Activated T-helper 2 cell treated with anti-CD3 and anti-CD28 coated beads, Interferon-gamma antibody, Interleukin-2, Interleukin-4, amounts not matched to agents 10 μg/mL and 5 μg/mL and 100 μg/mL, durations not matched to agents 14 hours and 24 hours and 36 hours (primary cell): ENCODE measurements at regions of chr15 and their contacts with region 1.

Region 1: GRCh38 chr15:52256366-52256765 is 39.2 kb downstream of the MYO5C start:
- DNase-seq: peak; percentile 68
- H3K4me3 Mint-ChIP-seq: peak overlapping the region; percentile 54
- H3K27ac Mint-ChIP-seq: peak overlapping the region; percentile 77
- H3K4me1 Mint-ChIP-seq: peaks cover 42% of the 10 kb centered on the region
- H3K27me3 Mint-ChIP-seq: no peaks in the 10 kb centered on the region

Region 2: GRCh38 chr15:51737280-51738017 is 518.9 kb before region 1 on chr15 and contains the start of gene LYSMD2:
- intact Hi-C with region 1: loop called (anchors 10 kb)
- DNase-seq: peak; percentile 59
- H3K4me3 Mint-ChIP-seq: peak within 1 kb of the TSS; percentile 78
- H3K27ac Mint-ChIP-seq: peak within 1 kb of the TSS; percentile 74
- H3K4me1 Mint-ChIP-seq: peaks cover 42% of the 10 kb centered on the region
- H3K27me3 Mint-ChIP-seq: peaks cover 6% of the 10 kb centered on the region
- total RNA-seq, gene LYSMD2: 4.0 and 5.8 TPM in 2 replicates

Region 3: GRCh38 chr15:52234596-52235541 is 21.5 kb before region 1 on chr15:
- intact Hi-C with region 1: no loop called
- DNase-seq: no peak
- H3K4me3 Mint-ChIP-seq: no peak overlapping the region
- H3K27ac Mint-ChIP-seq: no peak overlapping the region
- H3K4me1 Mint-ChIP-seq: peaks cover 20% of the 10 kb centered on the region
- H3K27me3 Mint-ChIP-seq: no peaks in the 10 kb centered on the region

Region 4: DNA sequence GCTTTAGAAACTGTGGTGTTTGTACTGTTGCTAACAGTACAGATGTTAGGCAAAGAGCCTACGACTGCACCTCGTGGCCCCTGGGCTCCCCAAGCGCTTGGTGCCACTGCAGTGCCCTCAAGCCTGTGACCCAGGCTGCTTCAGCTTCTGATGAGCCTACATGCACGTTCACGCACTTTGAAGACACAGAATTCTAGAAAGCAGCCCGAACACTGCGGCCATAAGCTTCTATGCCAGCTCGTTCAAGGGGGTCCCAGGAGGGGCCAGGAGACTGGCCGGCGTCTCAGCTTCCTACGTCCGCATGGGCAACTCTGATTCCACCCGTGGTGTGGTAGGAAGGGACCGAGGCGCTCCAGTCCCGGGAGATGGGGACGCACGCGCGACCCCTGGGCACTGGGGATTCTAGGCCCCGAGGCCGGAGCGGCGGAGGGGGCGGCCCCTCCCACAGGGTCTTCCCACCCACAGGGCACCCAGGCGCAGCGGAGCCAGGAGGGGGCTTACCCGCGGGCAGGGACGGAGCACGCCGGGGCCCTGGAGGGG is 38.6 kb after region 1 on chr15:
- intact Hi-C with region 1: loop called (anchors 5 kb)
- DNase-seq: no peak
- H3K4me3 Mint-ChIP-seq: peak overlapping the region; percentile 59
- H3K27ac Mint-ChIP-seq: no peak overlapping the region
- H3K4me1 Mint-ChIP-seq: peaks cover 13% of the 10 kb centered on the region
- H3K27me3 Mint-ChIP-seq: peaks cover 54% of the 10 kb centered on the region

Region 5: GRCh38 chr15:52331490-52332240 is 75.3 kb after region 1 on chr15:
- intact Hi-C with region 1: loop called (anchors 1 kb)
- DNase-seq: peak; percentile 54
- H3K4me3 Mint-ChIP-seq: peak overlapping the region; percentile 19
- H3K27ac Mint-ChIP-seq: peak overlapping the region; percentile 66
- H3K4me1 Mint-ChIP-seq: peaks cover 24% of the 10 kb centered on the region
- H3K27me3 Mint-ChIP-seq: no peaks in the 10 kb centered on the region

Region 6: GRCh38 chr15:52481915-52482314 is 225.5 kb after region 1 on chr15:
- intact Hi-C with region 1: loop called (anchors 10 kb)
- DNase-seq: peak; percentile 64
- H3K4me3 Mint-ChIP-seq: peak overlapping the region; percentile 66
- H3K27ac Mint-ChIP-seq: peak overlapping the region; percentile 80
- H3K4me1 Mint-ChIP-seq: peaks cover 64% of the 10 kb centered on the region
- H3K27me3 Mint-ChIP-seq: no peaks in the 10 kb centered on the region

Region 7: GRCh38 chr15:52735231-52736089 is 479.1 kb after region 1 on chr15:
- intact Hi-C with region 1: loop called (anchors 1 kb)
- DNase-seq: peak; percentile 64
- H3K4me3 Mint-ChIP-seq: no peak overlapping the region
- H3K27ac Mint-ChIP-seq: no peak overlapping the region
- H3K4me1 Mint-ChIP-seq: peaks cover 16% of the 10 kb centered on the region
- H3K27me3 Mint-ChIP-seq: peaks cover 16% of the 10 kb centered on the region